Right cardiac atrium (tissue), 5 donors: ENCODE measurements at regions of chr2 and their contacts with region 1.

Region 1: GRCh38 chr2:130181325-130181879 is at the start of gene SMPD4:
- DNase-seq: peak; percentile 98 to 99 (median 99)
- ATAC-seq: peak; percentile 95
- H3K4me3 ChIP-seq: peak within 1 kb of the TSS; percentile 90
- H3K27ac ChIP-seq: peak within 1 kb of the TSS; percentile 74
- H3K4me1 ChIP-seq: peaks cover 3% of the 10 kb centered on the region
- H3K27me3 ChIP-seq: no peaks in the 10 kb centered on the region
- total RNA-seq, gene SMPD4: 22.3 to 24.8 (median 24.2) TPM

Region 2: GRCh38 chr2:129347486-129348217 is 833.8 kb before region 1 on chr2:
- intact Hi-C with region 1: no loop called
- DNase-seq: no peak
- ATAC-seq: peak in 1 of 2 donors; percentile 54
- H3K4me3 ChIP-seq: no peak overlapping the region
- H3K27ac ChIP-seq: no peak overlapping the region
- H3K4me1 ChIP-seq: no peaks in the 10 kb centered on the region
- H3K27me3 ChIP-seq: no peaks in the 10 kb centered on the region

Region 3: DNA sequence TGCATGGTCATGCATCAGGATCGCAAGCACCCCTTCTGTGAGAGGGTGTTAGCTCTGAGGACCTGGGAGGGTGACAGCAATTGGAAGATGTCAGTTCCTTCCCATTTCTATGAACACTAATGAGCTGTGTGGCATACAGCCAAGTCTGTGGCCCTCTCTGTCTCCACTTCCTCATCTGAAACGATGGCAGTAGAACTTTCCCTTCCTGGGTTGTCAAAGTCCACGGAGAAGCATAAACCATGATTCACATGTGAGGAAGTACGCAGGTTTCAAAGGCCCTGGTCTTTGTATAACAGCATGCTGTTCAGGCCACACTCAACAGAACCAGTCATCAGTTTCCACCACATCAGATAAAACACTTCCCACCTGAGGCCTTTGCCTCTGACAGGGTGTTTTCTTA is 369.3 kb before region 1 on chr2:
- intact Hi-C with region 1: no loop called
- DNase-seq: peak in 2 of 3 donors; percentile 51 to 77
- ATAC-seq: peak; percentile 36 to 62
- H3K4me3 ChIP-seq: no peak overlapping the region
- H3K27ac ChIP-seq: no peak overlapping the region
- H3K4me1 ChIP-seq: no peaks in the 10 kb centered on the region
- H3K27me3 ChIP-seq: peaks cover 2% of the 10 kb centered on the region

Region 4: DNA sequence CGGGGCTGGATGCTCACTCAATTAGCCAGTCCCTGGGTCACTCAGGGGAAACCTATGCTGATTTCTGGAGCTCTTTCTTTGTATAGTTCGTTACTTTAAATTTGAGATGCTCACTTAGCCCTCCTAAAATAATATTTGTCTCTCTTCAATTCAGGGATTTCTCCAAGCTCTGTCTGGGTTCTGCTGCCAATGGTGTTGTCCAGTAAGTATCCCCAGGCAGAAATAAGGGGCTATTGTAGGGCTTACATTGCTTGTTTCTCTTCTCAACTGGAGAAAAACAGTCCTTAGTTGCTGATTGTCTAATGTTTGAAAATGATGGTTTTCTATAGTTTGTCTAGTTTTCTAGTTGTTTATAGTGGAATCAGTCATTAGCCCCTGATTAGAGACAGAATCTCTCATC is 197.0 kb before region 1 on chr2:
- intact Hi-C with region 1: no loop called
- DNase-seq: no peak
- ATAC-seq: no peak
- H3K4me3 ChIP-seq: no peak overlapping the region
- H3K27ac ChIP-seq: no peak overlapping the region
- H3K4me1 ChIP-seq: no peaks in the 10 kb centered on the region
- H3K27me3 ChIP-seq: no peaks in the 10 kb centered on the region

Region 5: DNA sequence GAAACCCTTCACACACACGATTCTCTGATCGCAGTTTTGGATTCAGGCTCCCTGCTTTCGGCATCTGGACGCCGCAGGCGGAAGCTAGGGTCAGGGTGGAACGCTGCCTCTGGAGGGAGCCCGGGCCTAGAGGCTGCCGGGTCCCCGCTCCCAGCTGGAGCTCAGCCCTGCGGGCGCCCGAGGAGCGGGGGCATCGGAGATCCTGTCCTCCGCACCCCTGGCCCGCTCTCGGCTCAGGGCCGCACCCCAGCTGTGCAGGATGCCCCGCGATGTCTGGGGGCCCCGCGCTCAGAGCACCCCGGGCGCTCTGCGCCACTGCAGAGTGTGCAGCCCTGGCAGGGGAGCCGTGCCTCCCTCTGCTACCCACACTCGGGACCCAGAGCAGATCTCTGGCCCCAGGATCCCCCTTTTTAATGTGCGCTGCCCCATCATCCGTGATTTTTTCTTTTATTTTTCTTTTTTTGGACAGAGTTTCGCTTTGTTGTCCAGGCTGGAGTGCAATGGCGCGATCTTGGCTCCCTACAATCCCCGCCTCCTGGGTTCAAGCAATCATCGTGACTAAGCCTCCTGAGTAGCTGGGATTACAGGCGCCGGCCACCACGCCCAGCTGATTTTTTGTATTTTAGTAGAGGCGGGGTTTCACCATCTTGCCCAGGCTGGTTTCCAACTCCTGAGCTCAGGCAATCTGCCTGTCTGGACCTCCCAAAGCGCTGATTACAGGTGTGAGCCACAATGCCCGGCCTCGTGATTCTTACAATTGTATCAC is 71.7 kb after region 1 on chr2:
- intact Hi-C with region 1: no loop called
- DNase-seq: no peak
- ATAC-seq: peak; percentile 60 to 62
- H3K4me3 ChIP-seq: no peak overlapping the region
- H3K27ac ChIP-seq: no peak overlapping the region
- H3K4me1 ChIP-seq: no peaks in the 10 kb centered on the region
- H3K27me3 ChIP-seq: no peaks in the 10 kb centered on the region

Region 6: GRCh38 chr2:130332271-130333073 is 151.1 kb after region 1 on chr2:
- intact Hi-C with region 1: loop called in 2 of 4 experiments (anchors 5 to 10 kb)
- DNase-seq: peak; percentile 76 to 91 (median 88)
- ATAC-seq: peak; percentile 68 to 79
- H3K4me3 ChIP-seq: no peak overlapping the region
- H3K27ac ChIP-seq: no peak overlapping the region
- H3K4me1 ChIP-seq: no peaks in the 10 kb centered on the region
- H3K27me3 ChIP-seq: no peaks in the 10 kb centered on the region

Region 7: DNA sequence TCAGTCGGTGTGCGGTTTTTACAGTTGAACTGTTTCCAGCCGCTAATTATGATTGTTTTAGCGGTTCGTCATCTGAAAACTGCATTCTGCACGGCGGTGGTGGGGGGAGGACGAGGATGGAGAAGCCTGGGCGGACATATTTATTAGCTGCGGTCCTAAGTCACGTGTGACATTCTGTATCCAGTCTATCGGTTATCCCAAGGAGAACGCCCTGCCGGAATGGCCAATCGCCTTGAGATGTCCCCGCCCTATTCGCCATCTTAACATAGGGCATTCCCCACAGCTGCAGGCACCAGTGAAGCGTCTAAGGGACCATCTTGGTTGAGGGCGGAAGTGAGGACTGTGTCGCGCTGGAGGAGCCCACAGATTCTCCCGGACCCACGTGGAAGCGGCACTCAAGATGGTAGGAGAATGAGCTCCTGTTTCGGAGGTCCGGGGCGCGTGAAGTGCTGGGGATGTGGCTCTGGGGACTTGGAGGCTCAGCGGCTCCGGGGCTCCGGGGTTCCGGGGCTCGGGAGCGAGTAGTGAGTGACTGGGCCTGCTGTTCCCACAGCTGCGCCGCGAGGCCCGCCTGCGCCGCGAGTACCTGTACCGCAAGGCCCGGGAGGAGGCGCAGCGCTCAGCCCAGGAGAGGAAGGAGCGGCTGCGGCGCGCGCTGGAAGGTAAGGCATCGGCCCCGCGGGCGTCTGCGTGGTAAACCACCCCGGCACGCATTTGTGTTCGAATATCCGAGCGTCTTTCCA is 161.3 kb after region 1 on chr2 and contains the start of gene IMP4:
- intact Hi-C with region 1: loop called in 2 of 4 experiments (anchors 10 kb)
- DNase-seq: peak; percentile 96 to 98 (median 96)
- ATAC-seq: peak; percentile 98
- H3K4me3 ChIP-seq: peak within 1 kb of the TSS; percentile 74
- H3K27ac ChIP-seq: peak within 1 kb of the TSS; percentile 96
- H3K4me1 ChIP-seq: no peaks in the 10 kb centered on the region
- H3K27me3 ChIP-seq: no peaks in the 10 kb centered on the region
- total RNA-seq, gene IMP4: 48.0 to 59.9 (median 55.8) TPM